HCT116 (cell line): ENCODE measurements at regions of chr15 and their contacts with region 1.

Region 1: GRCh38 chr15:60478566-60479360 is at the start of gene ICE2:
- DNase-seq: peak; percentile 81
- ATAC-seq: peak; percentile 94
- H3K4me3 ChIP-seq: peak within 1 kb of the TSS; percentile 68 to 98
- H3K27ac ChIP-seq: peak within 1 kb of the TSS; percentile 89
- H3K4me1 ChIP-seq: peaks cover 16 to 21% of the 10 kb centered on the region in 2 experiments; a peak in 3 of 4 replicates
- H3K27me3 ChIP-seq: no peaks in the 10 kb centered on the region
- CTCF ChIP-seq: no peak
- POLR2A ChIP-seq: peak; percentile 95
- RAD21 ChIP-seq: no peak
- total RNA-seq, gene ICE2: 62.8 TPM

Region 2: GRCh38 chr15:60134609-60135008 is 344.2 kb before region 1 on chr15:
- CTCF ChIA-PET with region 1: no interaction called
- POLR2A ChIA-PET with region 1: no interaction called
- RAD21 ChIA-PET with region 1: no interaction called
- intact Hi-C with region 1: no loop called
- DNase-seq: no peak
- ATAC-seq: peak; percentile 78
- H3K4me3 ChIP-seq: no peak overlapping the region
- H3K27ac ChIP-seq: no peak overlapping the region
- H3K4me1 ChIP-seq: no peaks in the 10 kb centered on the region
- H3K27me3 ChIP-seq: peaks cover 54% of the 10 kb centered on the region
- CTCF ChIP-seq: peak in 2 of 3 experiments; percentile 36 to 42; a peak in 4 of 6 replicates
- POLR2A ChIP-seq: no peak
- RAD21 ChIP-seq: 0 out of 2 replicates have a peak, but pooled peaks have one; percentile 12

Region 3: GRCh38 chr15:60374628-60375081 is 104.1 kb before region 1 on chr15:
- CTCF ChIA-PET with region 1: no interaction called
- POLR2A ChIA-PET with region 1: no interaction called
- RAD21 ChIA-PET with region 1: interaction called in 1 of 2 experiments, 3 read pairs
- intact Hi-C with region 1: loop called (anchors 5 kb)
- DNase-seq: peak; percentile 96
- ATAC-seq: peak; percentile 71
- H3K4me3 ChIP-seq: peak overlapping the region in 1 of 2 experiments; percentile 16; a peak in 2 of 4 replicates
- H3K27ac ChIP-seq: peak overlapping the region; percentile 93
- H3K4me1 ChIP-seq: peaks cover 88 to 99% of the 10 kb centered on the region in 2 experiments
- H3K27me3 ChIP-seq: no peaks in the 10 kb centered on the region
- CTCF ChIP-seq: no peak
- POLR2A ChIP-seq: no peak
- RAD21 ChIP-seq: peak; percentile 27; the same call in 1 of the 2 replicates